ENCODE measurements at regions of chrX and their contacts with region 1.

Region 1: DNA sequence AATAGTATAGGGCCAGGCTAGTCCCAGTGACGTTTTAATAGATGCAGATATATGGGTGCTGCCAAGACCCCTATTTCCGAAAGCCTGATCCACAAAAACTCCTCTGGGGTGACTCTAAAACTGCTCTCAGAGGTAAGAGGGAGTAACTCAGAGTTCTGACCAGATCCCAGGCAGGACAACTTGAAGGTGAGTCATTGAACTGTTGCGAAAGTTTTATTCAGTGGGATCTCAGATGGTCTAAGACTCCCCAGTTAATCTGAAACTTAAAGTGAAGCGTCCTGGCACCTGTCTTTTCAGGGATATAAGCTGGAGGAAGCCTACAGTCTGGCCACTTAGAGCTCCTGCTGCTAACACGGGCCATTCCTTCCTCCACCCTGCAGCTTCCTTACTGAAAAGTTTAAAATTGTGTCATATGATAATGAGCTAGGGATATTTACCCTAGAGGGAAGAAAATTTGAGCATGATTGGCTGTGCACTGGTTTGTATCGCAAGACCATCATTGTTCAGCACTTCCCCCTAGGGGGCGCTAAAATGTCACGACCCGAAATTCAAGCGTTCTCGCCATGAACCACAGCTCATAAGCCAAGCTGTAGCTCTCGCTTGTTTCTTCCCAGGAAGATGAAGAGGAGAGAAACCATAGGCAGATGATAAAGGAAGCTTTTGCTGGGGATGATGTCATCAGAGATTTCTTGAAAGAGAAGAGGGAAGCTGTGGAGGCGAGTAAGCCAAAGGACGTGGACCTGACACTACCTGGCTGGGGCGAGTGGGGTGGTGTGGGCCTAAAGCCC is 19.5 kb downstream of the UTP14A start:
- DNase-seq: peak; percentile 83

Region 2: DNA sequence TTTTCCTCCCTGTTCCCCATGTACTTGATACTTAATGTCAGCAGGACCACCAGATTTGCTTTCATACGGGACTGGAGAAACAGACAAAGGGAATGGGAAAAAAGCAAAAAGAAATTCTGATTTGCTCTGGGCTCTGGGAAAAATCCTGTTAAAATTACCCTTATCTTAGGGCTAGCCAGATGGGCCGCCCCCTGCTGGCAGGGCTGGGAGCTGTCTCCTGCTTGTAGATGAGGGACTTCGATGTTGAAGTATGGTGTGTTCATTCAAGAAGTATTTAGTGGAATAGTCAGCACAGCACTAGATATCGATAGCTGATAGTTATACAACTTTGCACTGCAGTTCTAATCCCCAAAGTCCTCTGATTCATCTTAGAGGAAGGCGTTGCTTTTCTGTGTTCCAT is 102.7 kb after region 1 on chrX:
- CTCF ChIA-PET with region 1: interaction called, 25 read pairs
- POLR2A ChIA-PET with region 1: no interaction called
- DNase-seq: peak; percentile 74

Region 3: GRCh38 chrX:130060122-130061069 is 134.9 kb after region 1 on chrX:
- CTCF ChIA-PET with region 1: interaction called, 33 read pairs
- POLR2A ChIA-PET with region 1: interaction called, 8 read pairs
- DNase-seq: peak; percentile 99

Measured in HEK293T (cell line).